Heart left ventricle (tissue), 16 donors: ENCODE measurements at regions of chr15 and their contacts with region 1.

Region 1: GRCh38 chr15:45611305-45611704 is 23.5 kb upstream of the SQOR start:
- DNase-seq: no peak
- ATAC-seq: no peak
- H3K4me3 ChIP-seq: no peak overlapping the region
- H3K27ac ChIP-seq: no peak overlapping the region
- H3K4me1 ChIP-seq: peaks cover 0 to 4% (median 0%) of the 10 kb centered on the region in 12 donors
- H3K27me3 ChIP-seq: no peaks in the 10 kb centered on the region
- CTCF ChIP-seq: peak in 10 of 12 donors; percentile 13 to 47 (median 30)
- POLR2A ChIP-seq: no peak

Region 2: GRCh38 chr15:45166834-45167630 is 444.3 kb before region 1 on chr15:
- intact Hi-C with region 1: loop called in 2 of 10 experiments (anchors 5 to 10 kb)
- DNase-seq: peak; percentile 85 to 93 (median 91)
- ATAC-seq: peak; percentile 67 to 87 (median 85)
- H3K4me3 ChIP-seq: peak overlapping the region; percentile 59 to 93 (median 76)
- H3K27ac ChIP-seq: peak overlapping the region; percentile 94 to 100 (median 99)
- H3K4me1 ChIP-seq: peaks cover 0 to 31% (median 14%) of the 10 kb centered on the region in 12 donors
- H3K27me3 ChIP-seq: no peaks in the 10 kb centered on the region
- CTCF ChIP-seq: peak; percentile 32 to 70 (median 58)
- POLR2A ChIP-seq: peak in 1 of 2 donors; percentile 39

Region 3: GRCh38 chr15:45522328-45523160 is 88.8 kb before region 1 on chr15 and contains the start of gene SLC30A4:
- intact Hi-C with region 1: loop called in 5 of 10 experiments (anchors 1 to 10 kb)
- DNase-seq: peak; percentile 71 to 87 (median 75)
- ATAC-seq: peak; percentile 86 to 98 (median 95)
- H3K4me3 ChIP-seq: peak within 1 kb of the TSS; percentile 71 to 98 (median 89)
- H3K27ac ChIP-seq: peak within 1 kb of the TSS; percentile 69 to 90 (median 84)
- H3K4me1 ChIP-seq: peaks cover 0 to 29% (median 15%) of the 10 kb centered on the region in 12 donors
- H3K27me3 ChIP-seq: peaks cover 0 to 9% (median 0%) of the 10 kb centered on the region in 9 donors
- CTCF ChIP-seq: peak in 11 of 12 donors; percentile 33 to 74 (median 51)
- POLR2A ChIP-seq: peak in 1 of 2 donors; percentile 75
- total RNA-seq, gene SLC30A4: 2.5 to 4.7 (median 3.4) TPM

Region 4: GRCh38 chr15:45829336-45830153 is 218.2 kb after region 1 on chr15:
- intact Hi-C with region 1: no loop called
- DNase-seq: no peak
- ATAC-seq: no peak
- H3K4me3 ChIP-seq: no peak overlapping the region
- H3K27ac ChIP-seq: no peak overlapping the region
- H3K4me1 ChIP-seq: no peaks in the 10 kb centered on the region
- H3K27me3 ChIP-seq: no peaks in the 10 kb centered on the region
- CTCF ChIP-seq: no peak
- POLR2A ChIP-seq: no peak